ENCODE measurements at regions of chr7 and their contacts with region 1.

Region 1: DNA sequence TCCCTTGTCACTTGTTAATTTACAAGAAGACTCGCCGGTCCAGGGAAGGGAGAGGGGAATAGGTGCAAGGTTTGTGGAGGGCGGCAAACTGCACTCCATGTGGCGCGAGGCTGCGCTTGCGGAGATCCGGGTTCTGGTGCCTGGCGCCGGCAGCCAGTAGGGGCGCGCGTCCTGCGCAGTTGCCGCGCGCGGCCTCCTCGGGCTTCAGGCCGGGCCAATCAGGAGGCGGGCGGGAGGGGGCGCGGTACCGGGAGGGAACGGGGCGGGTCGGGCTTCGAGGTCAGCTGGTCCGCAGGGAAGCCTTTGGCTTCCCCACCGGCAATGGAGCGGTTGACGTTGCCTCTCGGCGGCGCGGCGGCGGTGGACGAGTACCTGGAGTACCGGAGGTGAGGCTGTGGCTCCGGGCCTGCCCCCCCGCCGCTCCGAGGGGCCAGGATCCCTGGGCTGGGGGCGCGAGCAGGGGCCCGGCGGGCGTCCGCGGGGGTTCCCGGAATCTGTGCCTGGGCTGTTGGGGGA is at the start of gene FAM221A:
- DNase-seq: peak; percentile 83 to 98 (median 92)

Region 2: DNA sequence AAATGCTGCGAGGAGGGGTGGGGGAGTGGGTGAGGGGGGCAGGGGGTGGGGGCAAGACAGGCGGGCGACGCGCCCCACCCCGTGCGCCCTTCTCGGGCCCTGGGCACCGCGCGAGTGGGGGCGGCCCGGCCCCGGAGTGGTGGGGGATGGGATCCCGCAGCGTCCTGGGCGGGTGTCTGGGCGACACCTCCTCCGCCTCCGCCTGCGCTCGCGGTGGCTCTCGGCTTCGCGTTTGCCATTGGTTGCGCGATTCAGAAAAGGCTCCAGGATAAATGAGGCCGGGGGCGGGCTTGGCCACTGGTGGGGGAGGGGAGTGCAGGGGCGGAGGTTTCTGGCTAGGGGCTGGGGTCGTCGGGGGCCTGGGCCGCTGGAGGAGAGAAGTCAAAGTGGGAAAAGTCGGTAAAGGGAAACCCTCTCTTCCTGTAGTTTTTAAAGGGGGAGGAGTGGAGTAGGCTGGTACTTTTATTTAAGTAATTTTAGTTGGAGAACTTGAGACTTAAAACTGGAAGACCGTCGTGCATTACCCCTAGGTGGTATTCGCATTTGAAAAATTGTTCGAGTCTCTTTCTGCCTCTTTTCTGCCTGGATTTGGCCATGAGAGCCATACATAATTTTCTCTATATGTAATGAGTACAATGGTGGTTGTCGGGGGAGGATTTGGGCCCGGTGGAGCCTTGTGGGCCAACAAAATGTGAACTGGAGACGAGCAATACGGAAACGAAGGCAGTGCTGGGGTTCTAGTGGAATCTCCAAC is 208.7 kb before region 1 on chr7:
- intact Hi-C with region 1: no loop called
- DNase-seq: peak in 1 of 10 donors; percentile 46

Region 3: GRCh38 chr7:23597094-23598091 is 82.6 kb before region 1 on chr7 and contains the start of gene CCDC126:
- intact Hi-C with region 1: loop called (anchors 2 kb)
- DNase-seq: peak; percentile 89 to 99 (median 94)